Psoas muscle (tissue), 8 donors: ENCODE measurements at regions of chr17 and their contacts with region 1.

Region 1: DNA sequence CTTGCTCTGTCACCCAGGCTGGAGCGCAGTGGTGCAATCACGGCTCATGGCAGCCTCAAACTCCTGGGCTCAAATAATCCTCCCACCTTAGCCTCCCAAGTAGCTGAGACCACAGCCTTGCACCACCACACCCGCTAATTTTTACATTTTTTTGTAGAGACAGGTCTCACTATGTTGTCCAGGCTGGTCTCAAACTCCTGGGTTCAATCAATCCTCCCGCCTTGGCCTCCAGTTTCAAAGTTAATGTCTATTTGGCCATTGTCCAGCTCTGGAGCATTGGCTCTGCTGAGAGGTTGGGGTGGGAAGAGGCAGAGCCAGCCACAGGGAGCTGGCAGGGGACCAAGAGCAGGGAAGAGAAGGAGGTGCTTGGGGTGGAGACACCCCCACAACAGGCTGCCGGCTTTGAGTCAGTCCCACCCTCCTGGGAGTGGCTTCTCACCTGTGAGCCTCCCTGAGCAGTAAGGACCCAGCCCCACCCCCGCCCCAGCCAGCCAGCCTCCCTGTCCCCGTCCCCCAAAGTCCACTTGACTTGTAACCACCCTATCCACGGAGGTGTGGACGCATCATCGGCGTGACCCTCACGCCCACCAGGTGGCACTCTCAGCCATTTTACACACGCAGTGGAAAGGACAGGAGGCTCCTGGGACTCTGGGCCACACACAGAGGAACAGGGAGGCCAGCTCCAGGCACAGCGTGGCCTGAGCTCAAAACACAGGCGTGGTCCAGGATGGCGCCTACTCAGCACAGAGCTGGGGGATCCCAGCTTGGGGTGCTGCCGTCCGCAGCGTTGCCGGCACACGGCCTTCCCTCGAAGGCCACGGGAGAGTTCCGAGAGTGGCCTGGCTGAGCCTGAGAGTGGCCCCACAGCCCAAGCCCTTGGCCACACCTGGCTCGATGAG is 22.8 kb upstream of the PVALEF start:
- DNase-seq: peak; percentile 81 to 90
- ATAC-seq: peak; percentile 90 to 98 (median 96)
- H3K4me3 ChIP-seq: peak overlapping the region; percentile 22
- H3K27ac ChIP-seq: no peak overlapping the region
- H3K4me1 ChIP-seq: peaks cover 6% of the 10 kb centered on the region
- H3K27me3 ChIP-seq: no peaks in the 10 kb centered on the region
- CTCF ChIP-seq: peak; percentile 67

Region 2: DNA sequence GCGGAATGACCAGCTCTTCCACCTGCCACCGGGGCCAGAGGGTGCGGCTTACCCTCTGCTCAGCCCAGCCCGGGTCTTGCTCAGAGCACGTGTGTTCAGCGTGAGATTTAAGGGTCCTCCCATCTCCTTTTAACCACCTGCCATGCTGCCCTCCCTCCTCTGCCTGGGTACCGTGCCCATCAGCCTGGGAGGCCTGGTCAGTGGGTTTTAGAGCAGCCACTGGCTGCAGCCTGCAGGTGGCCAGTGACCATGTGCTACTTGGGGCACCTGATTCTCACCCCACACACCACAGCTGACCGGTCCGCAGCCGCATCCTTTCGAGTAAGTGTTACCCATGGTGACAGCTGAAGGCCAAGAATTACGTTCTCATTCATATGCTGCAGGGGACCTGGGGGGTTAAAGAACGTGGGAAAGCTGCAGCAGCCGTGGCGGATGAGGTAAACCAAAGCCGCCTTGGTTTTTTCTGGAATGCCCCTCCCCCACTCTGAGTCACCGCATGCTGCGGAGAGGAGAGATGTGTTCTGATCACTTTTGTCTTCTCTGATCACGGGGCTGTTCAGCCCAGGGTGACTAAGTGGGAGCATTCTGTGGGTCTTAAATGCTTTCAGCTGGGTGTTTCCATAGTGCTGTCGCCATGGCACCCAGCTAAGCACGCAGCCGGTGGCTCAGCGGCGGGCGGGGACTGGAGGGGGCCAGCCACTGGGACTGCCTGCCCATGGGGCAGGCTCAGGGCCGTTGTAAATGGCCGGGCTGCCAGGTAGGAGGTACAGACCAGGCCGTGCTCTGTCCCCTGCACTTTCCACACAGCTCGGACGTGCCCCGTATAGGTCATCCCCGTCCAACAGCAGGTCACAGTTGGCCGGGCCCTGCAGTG is 47.8 kb before region 1 on chr17:
- intact Hi-C with region 1: no loop called
- DNase-seq: peak; percentile 78 to 81
- ATAC-seq: peak; percentile 42 to 72 (median 65)
- H3K4me3 ChIP-seq: no peak overlapping the region
- H3K27ac ChIP-seq: peak overlapping the region; percentile 53
- H3K4me1 ChIP-seq: peaks cover 28% of the 10 kb centered on the region
- H3K27me3 ChIP-seq: peaks cover 0 to 8% (median 0%) of the 10 kb centered on the region in 3 donors
- CTCF ChIP-seq: no peak

Region 3: DNA sequence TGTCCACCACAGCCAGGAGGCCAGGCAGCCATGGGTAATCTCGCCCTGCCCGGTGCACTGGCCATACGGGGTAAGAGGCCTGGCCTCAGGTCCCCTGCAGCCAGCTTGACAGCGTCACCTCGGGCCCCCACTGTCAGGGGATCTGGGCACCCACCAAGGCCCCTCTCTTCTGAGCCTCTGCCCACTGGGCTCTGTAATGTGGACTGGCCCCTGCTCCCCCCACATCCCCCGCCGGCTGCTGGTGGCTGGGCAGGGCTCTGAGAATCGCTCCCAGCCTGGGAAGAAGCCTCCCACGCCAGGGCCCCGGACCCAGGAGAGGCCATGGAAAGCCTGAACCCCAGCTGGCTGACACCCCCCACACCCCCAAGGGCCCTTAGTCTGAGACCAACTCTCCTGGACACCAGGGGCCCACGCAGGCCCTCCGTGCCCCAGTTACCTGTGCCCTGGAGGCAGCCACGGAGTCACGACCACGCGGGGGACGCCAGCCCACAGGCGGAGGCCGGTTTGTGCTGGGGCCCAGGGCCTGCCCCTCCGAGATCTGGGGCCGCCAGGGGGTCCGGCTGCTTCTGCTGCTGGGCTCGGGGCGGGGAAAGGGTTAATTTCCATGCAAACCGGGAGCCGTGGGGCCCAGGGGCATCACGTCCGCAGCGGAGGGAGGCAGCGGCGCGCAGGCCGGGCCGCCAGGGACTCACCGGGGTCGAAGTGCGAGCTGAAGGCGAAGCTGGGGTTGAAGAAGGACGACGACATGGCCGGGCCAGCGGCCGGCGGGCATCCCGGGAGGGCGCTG is 22.9 kb after region 1 on chr17 and contains the start of gene PVALEF:
- intact Hi-C with region 1: no loop called
- DNase-seq: peak in 1 of 2 donors; percentile 52
- ATAC-seq: peak in 2 of 4 donors; percentile 13 to 43
- H3K4me3 ChIP-seq: peak within 1 kb of the TSS; percentile 51
- H3K27ac ChIP-seq: no peak within 1 kb of the TSS
- H3K4me1 ChIP-seq: peaks cover 3% of the 10 kb centered on the region
- H3K27me3 ChIP-seq: peaks cover 0 to 44% (median 13%) of the 10 kb centered on the region in 3 donors
- CTCF ChIP-seq: no peak
- total RNA-seq, gene PVALEF: not detected

Region 4: GRCh38 chr17:81189670-81190530 is 47.4 kb after region 1 on chr17:
- intact Hi-C with region 1: no loop called
- DNase-seq: peak in 1 of 2 donors; percentile 10
- ATAC-seq: peak in 1 of 4 donors; percentile 17
- H3K4me3 ChIP-seq: no peak overlapping the region
- H3K27ac ChIP-seq: no peak overlapping the region
- H3K4me1 ChIP-seq: no peaks in the 10 kb centered on the region
- H3K27me3 ChIP-seq: no peaks in the 10 kb centered on the region
- CTCF ChIP-seq: no peak

Region 5: GRCh38 chr17:81200695-81201580 is 58.4 kb after region 1 on chr17:
- intact Hi-C with region 1: loop called in 1 of 2 experiments (anchors 5 kb)
- DNase-seq: no peak
- ATAC-seq: peak in 3 of 4 donors; percentile 42 to 65 (median 49)
- H3K4me3 ChIP-seq: no peak overlapping the region
- H3K27ac ChIP-seq: no peak overlapping the region
- H3K4me1 ChIP-seq: no peaks in the 10 kb centered on the region
- H3K27me3 ChIP-seq: no peaks in the 10 kb centered on the region
- CTCF ChIP-seq: peak; percentile 37

Region 6: GRCh38 chr17:81241648-81242420 is 99.3 kb after region 1 on chr17:
- intact Hi-C with region 1: loop called (anchors 1 kb)
- DNase-seq: peak; percentile 62 to 84
- ATAC-seq: peak in 3 of 4 donors; percentile 16 to 41 (median 36)
- H3K4me3 ChIP-seq: no peak overlapping the region
- H3K27ac ChIP-seq: no peak overlapping the region
- H3K4me1 ChIP-seq: peaks cover 20% of the 10 kb centered on the region
- H3K27me3 ChIP-seq: no peaks in the 10 kb centered on the region
- CTCF ChIP-seq: peak; percentile 77

Region 7: GRCh38 chr17:81484195-81484979 is 341.8 kb after region 1 on chr17:
- intact Hi-C with region 1: no loop called
- DNase-seq: peak; percentile 90 to 95
- ATAC-seq: peak; percentile 71 to 80 (median 74)
- H3K4me3 ChIP-seq: peak overlapping the region; percentile 64
- H3K27ac ChIP-seq: peak overlapping the region; percentile 81
- H3K4me1 ChIP-seq: peaks cover 31% of the 10 kb centered on the region
- H3K27me3 ChIP-seq: no peaks in the 10 kb centered on the region
- CTCF ChIP-seq: peak; percentile 100

Region 8: GRCh38 chr17:81537343-81537855 is 394.8 kb after region 1 on chr17:
- intact Hi-C with region 1: loop called (anchors 5 to 10 kb)
- DNase-seq: peak; percentile 59 to 83
- ATAC-seq: peak; percentile 71 to 89 (median 78)
- H3K4me3 ChIP-seq: no peak overlapping the region
- H3K27ac ChIP-seq: no peak overlapping the region
- H3K4me1 ChIP-seq: peaks cover 15% of the 10 kb centered on the region
- H3K27me3 ChIP-seq: peaks cover 0 to 37% (median 11%) of the 10 kb centered on the region in 3 donors
- CTCF ChIP-seq: peak; percentile 79